MCF 10A (cell line): ENCODE measurements at regions of chr15 and their contacts with region 1.

Region 1: DNA sequence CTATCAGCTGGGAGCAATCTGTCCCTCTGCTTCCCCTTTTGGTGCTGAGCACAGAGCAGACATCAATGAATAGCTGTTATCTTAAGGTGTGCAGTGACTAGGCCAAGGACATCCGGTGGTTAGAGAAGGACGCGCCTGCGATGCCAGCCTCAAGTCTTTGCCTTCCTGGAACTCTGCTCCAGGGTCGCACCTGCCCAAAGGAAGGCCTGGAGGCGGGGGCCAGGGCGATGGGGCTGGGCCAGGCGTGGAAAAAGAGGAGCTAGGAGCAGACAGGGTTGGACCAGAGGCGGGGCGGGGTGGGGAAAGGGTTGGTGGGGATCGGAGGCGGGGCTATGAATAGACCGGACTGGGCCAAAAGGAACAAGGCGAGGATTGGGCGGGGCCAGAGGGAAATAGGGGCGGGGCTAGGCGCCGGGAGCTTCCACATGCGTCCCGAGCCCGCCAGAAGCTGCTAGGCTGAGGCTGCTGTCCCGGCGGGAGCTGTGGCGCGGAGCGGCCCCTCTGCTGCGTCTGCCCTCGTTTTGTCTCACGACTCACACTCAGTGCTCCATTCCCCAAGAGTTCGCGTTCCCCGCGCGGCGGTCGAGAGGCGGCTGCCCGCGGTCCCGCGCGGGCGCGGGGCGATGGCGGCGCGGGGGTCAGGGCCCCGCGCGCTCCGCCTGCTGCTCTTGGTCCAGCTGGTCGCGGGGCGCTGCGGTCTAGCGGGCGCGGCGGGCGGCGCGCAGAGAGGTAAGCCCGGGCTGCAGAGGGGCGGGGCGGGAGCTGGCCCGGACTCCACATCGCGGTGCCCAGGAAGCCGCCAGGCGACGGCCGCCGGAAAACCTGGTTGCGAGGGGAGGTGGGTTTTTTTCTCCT is at the start of gene CHRNA5:
- DNase-seq: peak; percentile 94
- H3K4me3 Mint-ChIP-seq: peak within 1 kb of the TSS; percentile 86
- H3K27ac Mint-ChIP-seq: peak within 1 kb of the TSS; percentile 54
- H3K4me1 Mint-ChIP-seq: peaks cover 8% of the 10 kb centered on the region
- H3K27me3 Mint-ChIP-seq: no peaks in the 10 kb centered on the region
- CTCF ChIP-seq: no peak
- total RNA-seq, gene CHRNA5: 1.9 and 2.3 TPM in 2 replicates

Region 2: DNA sequence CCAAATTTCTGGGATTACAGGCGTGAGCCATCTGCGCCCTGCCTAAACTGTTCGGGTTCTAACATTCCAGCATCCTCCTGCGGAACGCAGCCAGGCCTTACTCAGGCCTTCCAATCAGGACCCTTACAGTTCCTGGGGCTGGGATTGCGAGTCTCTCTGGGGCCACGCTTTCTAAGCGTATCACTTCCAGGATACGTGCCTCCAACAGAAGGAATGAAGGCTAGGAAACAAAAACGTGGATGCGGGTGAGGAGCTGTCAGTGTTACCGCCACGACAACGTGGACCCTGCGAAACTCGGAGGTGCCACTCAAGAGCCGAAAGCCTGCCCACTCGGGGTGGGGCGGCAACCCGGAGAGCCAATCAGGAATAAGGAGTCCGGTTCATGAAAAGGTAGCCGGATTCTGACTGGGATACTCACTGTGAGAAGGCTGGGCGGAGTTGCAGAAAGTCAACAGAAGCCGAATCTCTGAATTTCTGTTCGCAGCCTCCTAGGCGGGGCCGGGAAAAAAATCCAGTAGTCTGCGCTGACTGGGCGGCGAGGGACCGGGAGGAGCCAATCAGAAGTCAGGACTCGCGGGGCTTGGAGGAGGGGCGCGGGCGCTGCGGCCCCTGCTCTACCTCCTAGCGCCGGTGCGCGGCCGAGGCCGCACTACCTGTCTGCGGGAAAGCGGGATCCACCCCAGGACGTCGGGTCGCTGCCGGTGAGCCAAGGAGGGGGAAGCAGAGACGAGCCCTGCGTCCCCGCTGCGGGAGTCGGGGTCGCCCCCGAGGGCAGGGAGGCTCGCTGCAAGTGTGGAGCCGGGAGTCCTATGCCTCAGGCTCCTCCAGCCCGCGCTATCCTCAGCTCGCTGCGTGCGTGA is 58.1 kb before region 1 on chr15 and contains the start of gene HYKK:
- CTCF ChIA-PET with region 1: no interaction called
- POLR2A ChIA-PET with region 1: interaction called, 3 read pairs
- intact Hi-C with region 1: loop called (anchors 2 kb)
- DNase-seq: peak; percentile 99
- H3K4me3 Mint-ChIP-seq: peak within 1 kb of the TSS; percentile 85
- H3K27ac Mint-ChIP-seq: peak within 1 kb of the TSS; percentile 76
- H3K4me1 Mint-ChIP-seq: peaks cover 7% of the 10 kb centered on the region
- H3K27me3 Mint-ChIP-seq: no peaks in the 10 kb centered on the region
- CTCF ChIP-seq: no peak
- total RNA-seq, gene HYKK: 1.2 and 1.3 TPM in 2 replicates

Region 3: DNA sequence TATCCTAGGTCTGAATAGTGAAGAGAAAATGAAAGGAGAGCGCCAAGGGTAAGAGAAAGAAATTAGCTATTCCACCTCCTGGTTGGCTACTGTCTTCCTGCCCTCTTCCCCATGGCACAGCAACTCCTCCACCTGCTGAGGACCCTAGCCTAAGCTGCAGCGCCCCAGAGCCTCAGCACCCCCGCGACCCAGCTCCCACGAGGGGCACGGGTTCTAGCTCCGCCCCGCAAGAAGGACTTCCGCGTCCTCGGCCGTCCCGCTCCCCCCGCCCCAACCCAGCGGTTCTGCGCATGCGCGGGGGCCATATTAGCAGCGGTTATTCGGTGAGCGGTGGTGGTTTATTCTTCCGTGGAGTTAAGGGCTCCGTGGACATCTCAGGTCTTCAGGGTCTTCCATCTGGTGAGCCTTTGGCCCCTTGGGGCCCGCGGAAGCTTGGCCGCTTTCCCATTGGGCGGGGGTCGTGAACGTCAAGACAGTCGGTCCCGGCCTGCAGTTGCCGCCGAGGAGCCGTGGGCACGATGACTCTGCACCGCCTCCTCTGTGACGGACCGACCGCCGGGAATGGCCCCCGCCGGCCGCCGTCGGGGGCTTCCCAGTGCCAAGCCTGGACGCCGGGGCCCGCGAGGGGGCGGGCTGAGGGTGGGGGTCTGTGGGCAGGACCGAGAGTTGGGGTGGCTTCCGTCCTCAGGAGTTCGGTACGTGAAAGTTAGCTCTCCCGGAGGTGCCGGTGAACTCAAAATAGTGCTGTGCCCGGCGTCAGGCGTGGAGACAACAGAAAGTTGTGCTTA is 25.0 kb before region 1 on chr15 and contains the start of gene PSMA4:
- CTCF ChIA-PET with region 1: interaction called, 5 read pairs
- POLR2A ChIA-PET with region 1: interaction called, 67 read pairs
- intact Hi-C with region 1: loop called (anchors 2 kb)
- DNase-seq: peak; percentile 88
- H3K4me3 Mint-ChIP-seq: peak within 1 kb of the TSS; percentile 92
- H3K27ac Mint-ChIP-seq: peak within 1 kb of the TSS; percentile 97
- H3K4me1 Mint-ChIP-seq: peaks cover 14% of the 10 kb centered on the region
- H3K27me3 Mint-ChIP-seq: no peaks in the 10 kb centered on the region
- CTCF ChIP-seq: no peak
- total RNA-seq, gene PSMA4: 221 and 261 TPM in 2 replicates